ENCODE measurements at regions of chr3 and their contacts with region 1.

Region 1: GRCh38 chr3:111874177-111874820 is 15.2 kb downstream of the PHLDB2 start:
- DNase-seq: peak; percentile 93
- ATAC-seq: peak; percentile 97
- H3K4me3 ChIP-seq: peak overlapping the region in 1 of 2 experiments; percentile 26; a peak in 2 of 4 replicates
- H3K27ac ChIP-seq: peak overlapping the region; percentile 32; the same call in 1 of the 2 replicates
- H3K4me1 ChIP-seq: peaks cover 51 to 69% of the 10 kb centered on the region in 2 experiments
- H3K27me3 ChIP-seq: no peaks in the 10 kb centered on the region
- CTCF ChIP-seq: no peak
- POLR2A ChIP-seq: no peak
- RAD21 ChIP-seq: peak; percentile 29

Region 2: DNA sequence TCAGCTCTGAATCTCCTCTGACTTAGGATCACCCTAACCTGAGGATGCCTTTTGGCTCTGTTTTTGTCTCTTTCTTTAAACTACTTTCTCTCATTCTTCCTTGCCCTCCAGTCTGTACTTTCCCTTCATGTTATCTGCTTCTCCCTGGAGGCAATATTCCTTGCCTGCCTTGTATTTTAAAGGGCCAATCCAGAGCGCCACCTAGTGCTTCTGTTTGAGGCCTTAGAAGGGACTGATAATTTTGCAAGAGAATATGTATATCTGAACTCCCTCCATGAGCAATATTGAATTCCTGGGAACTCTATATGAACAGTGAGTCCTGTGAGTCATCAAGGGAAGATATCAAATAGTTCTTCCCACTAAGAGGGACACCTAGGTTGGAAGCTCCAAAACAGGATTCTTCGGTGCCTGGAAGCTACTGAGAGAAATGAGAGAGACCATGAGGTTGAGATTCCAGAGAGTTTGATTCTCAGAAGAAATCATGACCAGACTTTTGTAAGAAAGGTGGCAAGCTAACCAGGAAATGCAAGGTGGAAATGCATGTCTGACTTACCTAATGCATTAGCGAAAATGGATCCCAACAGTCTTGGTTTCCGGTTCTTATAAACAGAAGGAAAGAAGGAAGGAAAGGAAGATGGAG is 536.1 kb before region 1 on chr3:
- CTCF ChIA-PET with region 1: no interaction called
- POLR2A ChIA-PET with region 1: no interaction called
- RAD21 ChIA-PET with region 1: no interaction called
- intact Hi-C with region 1: no loop called
- DNase-seq: peak; percentile 66
- ATAC-seq: peak; percentile 95
- H3K4me3 ChIP-seq: no peak overlapping the region
- H3K27ac ChIP-seq: no peak overlapping the region
- H3K4me1 ChIP-seq: peaks cover 0 to 18% of the 10 kb centered on the region in 2 experiments; a peak in 2 of 4 replicates
- H3K27me3 ChIP-seq: no peaks in the 10 kb centered on the region
- CTCF ChIP-seq: peak; percentile 72 to 92 (median 83); a peak in 5 of 6 replicates
- POLR2A ChIP-seq: no peak
- RAD21 ChIP-seq: peak; percentile 92

Region 3: GRCh38 chr3:111594205-111594604 is 280.1 kb before region 1 on chr3:
- CTCF ChIA-PET with region 1: no interaction called
- POLR2A ChIA-PET with region 1: no interaction called
- RAD21 ChIA-PET with region 1: no interaction called
- intact Hi-C with region 1: loop called (anchors 10 kb)
- DNase-seq: no peak
- ATAC-seq: peak; percentile 69
- H3K4me3 ChIP-seq: peak overlapping the region in 1 of 2 experiments; percentile 44; a peak in 3 of 4 replicates
- H3K27ac ChIP-seq: peak overlapping the region; percentile 60
- H3K4me1 ChIP-seq: peaks cover 33 to 69% of the 10 kb centered on the region in 2 experiments
- H3K27me3 ChIP-seq: no peaks in the 10 kb centered on the region
- CTCF ChIP-seq: no peak
- POLR2A ChIP-seq: no peak
- RAD21 ChIP-seq: no peak

Region 4: DNA sequence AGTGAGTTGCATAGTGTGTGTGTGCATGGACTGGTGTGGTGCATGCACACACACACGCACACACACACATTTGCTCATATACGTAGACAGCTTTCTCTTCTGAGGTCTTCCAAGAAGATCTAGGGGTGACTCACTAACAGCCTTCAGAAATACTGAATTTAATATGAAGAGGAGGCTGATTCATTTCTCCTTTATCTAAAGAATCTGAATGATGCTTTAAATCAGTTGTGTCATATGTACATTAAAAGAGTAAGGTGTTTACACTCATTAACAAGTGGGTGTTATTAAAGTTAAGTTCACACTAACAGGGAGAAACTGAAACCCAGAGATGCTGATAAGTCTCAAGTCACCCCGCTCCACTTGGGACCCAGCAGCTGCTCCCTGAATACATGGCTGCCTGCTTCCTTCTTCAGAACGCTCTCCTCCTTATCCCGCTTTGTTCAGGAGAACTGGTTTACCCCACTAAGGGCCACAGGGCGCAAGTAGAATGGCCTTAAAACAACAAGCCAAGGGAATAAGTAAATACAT is 182.2 kb after region 1 on chr3:
- CTCF ChIA-PET with region 1: interaction called, 3 read pairs
- POLR2A ChIA-PET with region 1: no interaction called
- RAD21 ChIA-PET with region 1: no interaction called
- intact Hi-C with region 1: loop called (anchors 1 kb)
- DNase-seq: no peak
- ATAC-seq: no peak
- H3K4me3 ChIP-seq: no peak overlapping the region
- H3K27ac ChIP-seq: no peak overlapping the region
- H3K4me1 ChIP-seq: 0 out of 4 replicates have a peak, but pooled peaks cover 0 to 3% of the 10 kb centered on the region in 2 experiments
- H3K27me3 ChIP-seq: no peaks in the 10 kb centered on the region
- CTCF ChIP-seq: no peak
- POLR2A ChIP-seq: no peak
- RAD21 ChIP-seq: no peak

Region 5: GRCh38 chr3:112446343-112446742 is 572.0 kb after region 1 on chr3:
- CTCF ChIA-PET with region 1: no interaction called
- POLR2A ChIA-PET with region 1: no interaction called
- RAD21 ChIA-PET with region 1: no interaction called
- intact Hi-C with region 1: no loop called
- DNase-seq: no peak
- ATAC-seq: no peak
- H3K4me3 ChIP-seq: no peak overlapping the region
- H3K27ac ChIP-seq: no peak overlapping the region
- H3K4me1 ChIP-seq: no peaks in the 10 kb centered on the region
- H3K27me3 ChIP-seq: no peaks in the 10 kb centered on the region
- CTCF ChIP-seq: no peak
- POLR2A ChIP-seq: no peak
- RAD21 ChIP-seq: no peak

Measured in HCT116 (cell line).